ENCODE measurements at regions of chr11 and their contacts with region 1.

Region 1: DNA sequence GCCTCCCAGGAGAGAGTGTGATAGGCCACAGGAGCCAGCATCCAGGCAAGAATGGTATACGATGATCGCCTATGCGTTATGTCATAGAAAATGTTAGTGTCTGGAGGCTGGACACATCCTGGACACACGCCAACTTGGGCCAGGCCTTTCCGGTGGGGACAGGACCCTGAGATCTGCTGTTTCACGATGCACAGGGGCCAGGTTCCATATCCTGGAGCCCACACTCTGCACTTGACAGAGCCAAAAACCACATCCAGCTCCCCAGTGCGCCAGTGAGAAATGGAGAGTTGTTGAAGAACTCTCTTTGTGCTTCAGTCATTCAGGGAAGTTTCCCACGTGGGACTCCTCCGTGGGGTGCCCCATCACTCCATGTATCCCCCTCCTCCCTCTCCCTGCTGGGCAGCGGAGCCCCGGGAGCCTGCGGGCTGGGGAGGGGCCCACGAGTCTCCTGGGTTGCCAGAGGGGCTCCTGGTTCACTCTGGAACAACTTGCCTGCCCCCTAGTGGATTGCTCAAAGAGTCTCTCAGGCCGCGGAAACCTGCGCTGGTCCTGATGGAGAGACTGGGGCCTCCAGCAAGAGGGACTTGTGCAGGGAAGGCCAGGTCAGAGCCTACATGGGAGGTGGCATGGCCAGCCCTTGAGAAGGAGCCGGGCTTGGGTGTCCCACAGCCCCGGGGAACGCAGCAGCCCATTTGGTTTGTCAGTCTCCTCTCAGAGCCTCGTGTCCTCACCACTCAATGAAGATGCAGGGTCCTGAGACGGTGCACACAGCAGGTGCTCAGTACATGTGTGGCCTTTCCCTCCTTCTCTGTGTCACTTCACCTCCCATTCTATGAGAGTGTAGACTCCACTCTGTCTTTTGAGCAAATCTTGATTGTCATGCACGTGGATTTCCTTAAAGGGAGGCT is 10.2 kb upstream of the LRRC32 start:
- DNase-seq: peak; percentile 88
- ATAC-seq: peak; percentile 95
- H3K4me3 Mint-ChIP-seq: no peak overlapping the region
- H3K27ac Mint-ChIP-seq: no peak overlapping the region
- H3K4me1 Mint-ChIP-seq: no peaks in the 10 kb centered on the region
- H3K27me3 Mint-ChIP-seq: peaks cover 4% of the 10 kb centered on the region; the same call in 1 of the 2 replicates
- CTCF ChIP-seq: peak; percentile 75

Region 2: DNA sequence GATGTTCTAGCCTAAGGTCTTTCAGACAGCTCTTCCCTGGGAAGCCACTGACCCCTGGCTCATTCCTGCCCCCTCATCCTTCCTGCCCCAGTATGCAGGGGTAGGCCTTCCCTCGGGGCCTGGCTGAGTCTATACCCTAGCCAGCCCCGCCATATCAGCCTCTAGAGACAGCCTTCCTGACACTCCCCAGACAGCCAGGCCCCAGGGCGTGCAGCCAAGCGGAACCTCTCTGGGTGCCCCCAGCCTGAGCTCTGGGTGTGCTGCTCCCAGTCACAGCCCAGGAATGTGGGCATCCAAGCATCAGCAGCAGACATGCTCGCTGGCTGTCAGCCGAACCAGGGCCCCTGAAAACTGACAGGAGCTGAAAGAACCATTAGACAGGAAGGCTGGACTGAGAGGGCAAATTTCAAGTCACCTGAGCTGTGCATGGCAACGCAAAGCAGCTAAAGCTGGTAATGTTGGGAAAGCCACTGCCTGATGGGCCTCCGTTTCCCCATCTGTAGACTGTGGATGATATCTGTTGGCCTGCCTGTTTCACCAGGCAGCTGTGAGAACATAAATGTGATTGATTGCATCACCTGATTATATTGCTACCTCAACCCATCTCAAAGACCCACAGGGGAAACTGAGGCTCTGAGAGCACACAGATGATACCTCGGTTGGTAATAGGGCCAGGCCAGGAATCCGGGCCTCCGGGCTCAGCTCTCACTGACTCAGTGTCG is 103.4 kb before region 1 on chr11:
- CTCF ChIA-PET with region 1: interaction called, 10 read pairs
- POLR2A ChIA-PET with region 1: no interaction called
- DNase-seq: no peak
- ATAC-seq: no peak; the same call in 1 of the 2 replicates
- H3K4me3 Mint-ChIP-seq: no peak overlapping the region
- H3K27ac Mint-ChIP-seq: no peak overlapping the region
- H3K4me1 Mint-ChIP-seq: peaks cover 22% of the 10 kb centered on the region
- H3K27me3 Mint-ChIP-seq: no peaks in the 10 kb centered on the region
- CTCF ChIP-seq: no peak